Natural killer cell (primary cell): ENCODE measurements at regions of chr5 and their contacts with region 1.

Region 1: GRCh38 chr5:42767491-42768105 is 11.0 kb downstream of the CCDC152 start:
- DNase-seq: peak in 1 of 2 donors; percentile 46
- ATAC-seq: peak in 2 of 3 donors; percentile 44 to 53
- H3K4me3 ChIP-seq: no peak overlapping the region
- H3K4me3 Mint-ChIP-seq: no peak overlapping the region
- H3K27ac ChIP-seq: no peak overlapping the region
- H3K27ac Mint-ChIP-seq: no peak overlapping the region
- H3K4me1 ChIP-seq: no peaks in the 10 kb centered on the region
- H3K4me1 Mint-ChIP-seq: no peaks in the 10 kb centered on the region
- H3K27me3 ChIP-seq: no peaks in the 10 kb centered on the region
- H3K27me3 Mint-ChIP-seq: peaks cover 4 to 5% of the 10 kb centered on the region in 2 donors
- CTCF ChIP-seq: peak; percentile 71

Region 2: DNA sequence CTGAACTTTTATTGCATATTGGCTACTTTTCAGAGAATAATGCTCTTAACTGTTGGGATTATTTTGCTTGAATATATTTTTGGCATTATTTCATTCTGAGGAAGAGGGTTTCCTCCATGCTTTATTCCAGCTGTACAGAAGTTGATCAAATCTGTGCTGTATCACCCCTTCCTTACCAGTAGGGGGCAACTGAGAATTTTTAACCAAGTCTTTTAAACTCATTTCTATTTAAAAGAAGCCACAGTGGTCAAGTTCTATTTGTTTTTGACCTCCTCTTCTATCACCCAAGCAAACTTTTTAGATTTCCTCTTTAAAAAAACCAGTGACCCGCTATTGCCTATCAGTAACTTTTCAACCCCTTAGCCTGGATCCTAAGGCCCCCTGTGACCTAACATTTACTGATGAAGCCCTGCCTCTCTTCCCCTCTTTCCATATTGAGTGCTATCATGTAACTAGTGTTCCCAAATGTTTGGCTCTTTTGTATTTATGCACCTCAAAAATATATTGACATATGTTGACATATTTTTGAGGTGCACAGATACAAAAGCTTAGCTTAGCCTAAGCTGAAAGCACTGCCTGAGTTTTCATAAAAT is 761.9 kb before region 1 on chr5:
- intact Hi-C with region 1: loop called (anchors 5 kb)
- DNase-seq: peak in 1 of 2 donors; percentile 22
- ATAC-seq: peak in 1 of 3 donors; percentile 38
- H3K4me3 ChIP-seq: no peak overlapping the region
- H3K4me3 Mint-ChIP-seq: no peak overlapping the region
- H3K27ac ChIP-seq: no peak overlapping the region
- H3K27ac Mint-ChIP-seq: no peak overlapping the region
- H3K4me1 ChIP-seq: no peaks in the 10 kb centered on the region
- H3K4me1 Mint-ChIP-seq: no peaks in the 10 kb centered on the region
- H3K27me3 ChIP-seq: no peaks in the 10 kb centered on the region
- H3K27me3 Mint-ChIP-seq: peaks cover 2 to 23% of the 10 kb centered on the region in 2 donors
- CTCF ChIP-seq: peak; percentile 80